Activated B cell treated with CpG ODN at 0.5 μM for 24 hours (primary cell): ENCODE measurements at regions of chr18 and their contacts with region 1.

Region 1: GRCh38 chr18:45212181-45213039 is 402.9 kb upstream of the SLC14A2 start:
- DNase-seq: peak; percentile 66
- ATAC-seq: peak; percentile 100
- H3K4me3 Mint-ChIP-seq: no peak overlapping the region
- H3K27ac Mint-ChIP-seq: no peak overlapping the region
- H3K4me1 Mint-ChIP-seq: peaks cover 7% of the 10 kb centered on the region
- H3K27me3 Mint-ChIP-seq: no peaks in the 10 kb centered on the region
- CTCF ChIP-seq: peak; percentile 96

Region 2: GRCh38 chr18:44130376-44130942 is 1082.0 kb before region 1 on chr18:
- CTCF ChIA-PET with region 1: interaction called, 22 read pairs
- POLR2A ChIA-PET with region 1: no interaction called
- intact Hi-C with region 1: loop called (anchors 1 kb)
- DNase-seq: no peak
- ATAC-seq: no peak
- H3K4me3 Mint-ChIP-seq: no peak overlapping the region
- H3K27ac Mint-ChIP-seq: no peak overlapping the region
- H3K4me1 Mint-ChIP-seq: peaks cover 8% of the 10 kb centered on the region
- H3K27me3 Mint-ChIP-seq: peaks cover 7% of the 10 kb centered on the region
- CTCF ChIP-seq: peak; percentile 24

Region 3: DNA sequence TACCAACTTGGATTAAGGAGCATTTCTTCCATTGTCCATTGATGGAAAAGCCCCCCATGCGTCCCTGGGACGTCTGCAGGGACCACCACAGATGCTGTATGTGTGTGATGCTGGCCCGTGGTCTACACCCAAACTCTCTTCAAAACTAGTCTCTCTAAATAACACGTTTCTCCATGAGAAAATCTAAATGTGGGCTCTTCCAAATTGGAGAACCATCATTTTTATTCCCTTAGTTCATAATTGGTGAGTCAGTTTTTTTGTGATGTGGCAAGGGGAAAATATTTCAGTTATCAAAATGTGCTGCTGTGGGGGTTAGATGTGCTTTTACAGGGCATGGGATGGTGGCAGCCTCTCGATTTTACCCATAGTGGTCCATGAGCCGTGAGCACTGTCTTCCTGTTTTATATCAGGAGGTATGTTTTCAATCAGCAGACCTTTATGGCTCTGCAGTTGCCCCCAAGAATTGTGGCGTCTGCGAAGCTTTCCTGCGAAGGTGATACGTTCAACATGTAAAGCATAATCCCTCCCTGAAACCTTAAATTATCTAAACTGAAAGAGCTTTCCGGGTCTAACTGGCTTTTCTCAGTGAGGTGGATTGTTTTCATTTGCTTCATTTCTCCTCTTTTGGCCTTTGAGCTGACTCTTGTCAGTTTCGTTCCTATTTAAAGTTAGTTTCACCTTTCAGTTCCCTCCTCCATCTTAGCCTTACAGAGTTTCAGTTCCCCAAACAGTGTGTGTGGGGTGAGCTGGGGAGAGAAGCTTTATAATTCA is 453.4 kb before region 1 on chr18:
- CTCF ChIA-PET with region 1: interaction called, 4 read pairs
- POLR2A ChIA-PET with region 1: no interaction called
- intact Hi-C with region 1: loop called (anchors 1 kb)
- DNase-seq: peak; percentile 41
- ATAC-seq: peak; percentile 87
- H3K4me3 Mint-ChIP-seq: peak overlapping the region; percentile 76
- H3K27ac Mint-ChIP-seq: peak overlapping the region; percentile 94
- H3K4me1 Mint-ChIP-seq: peaks cover 93% of the 10 kb centered on the region
- H3K27me3 Mint-ChIP-seq: no peaks in the 10 kb centered on the region
- CTCF ChIP-seq: no peak

Region 4: DNA sequence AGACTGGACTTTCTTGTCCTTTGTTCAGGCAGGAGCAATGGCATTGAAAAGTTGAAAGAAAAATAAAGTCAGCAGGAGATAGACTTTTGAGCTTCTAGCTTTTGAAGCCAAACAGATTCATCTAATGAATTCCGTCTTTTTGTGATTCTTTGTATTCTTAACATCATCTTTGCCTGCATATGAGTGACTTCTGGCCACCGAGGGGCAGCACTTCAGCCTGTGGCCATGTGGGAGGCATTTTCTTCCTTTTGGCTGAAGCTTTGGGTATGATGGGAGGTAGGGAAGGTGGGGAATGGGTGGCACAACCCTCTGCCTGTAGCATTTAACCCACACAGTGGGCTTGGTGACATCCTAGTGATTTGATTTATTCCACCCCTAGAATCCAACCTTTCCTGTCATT is 311.1 kb before region 1 on chr18:
- CTCF ChIA-PET with region 1: interaction called, 17 read pairs
- POLR2A ChIA-PET with region 1: no interaction called
- intact Hi-C with region 1: loop called (anchors 2 kb)
- DNase-seq: no peak
- ATAC-seq: no peak
- H3K4me3 Mint-ChIP-seq: no peak overlapping the region
- H3K27ac Mint-ChIP-seq: no peak overlapping the region
- H3K4me1 Mint-ChIP-seq: peaks cover 36% of the 10 kb centered on the region
- H3K27me3 Mint-ChIP-seq: no peaks in the 10 kb centered on the region
- CTCF ChIP-seq: no peak

Region 5: GRCh38 chr18:45090526-45091140 is 121.8 kb before region 1 on chr18:
- CTCF ChIA-PET with region 1: interaction called, 10 read pairs
- POLR2A ChIA-PET with region 1: no interaction called
- intact Hi-C with region 1: no loop called
- DNase-seq: no peak
- ATAC-seq: no peak
- H3K4me3 Mint-ChIP-seq: no peak overlapping the region
- H3K27ac Mint-ChIP-seq: no peak overlapping the region
- H3K4me1 Mint-ChIP-seq: peaks cover 3% of the 10 kb centered on the region
- H3K27me3 Mint-ChIP-seq: no peaks in the 10 kb centered on the region
- CTCF ChIP-seq: no peak